ENCODE measurements at regions of chr2 and their contacts with region 1.

Region 1: GRCh38 chr2:31523871-31524492 is 56.8 kb downstream of the SRD5A2 start:
- DNase-seq: peak; percentile 33
- ATAC-seq: peak; percentile 69
- H3K4me3 ChIP-seq: no peak overlapping the region
- H3K27ac ChIP-seq: no peak overlapping the region
- H3K4me1 ChIP-seq: no peaks in the 10 kb centered on the region
- H3K27me3 ChIP-seq: no peaks in the 10 kb centered on the region
- CTCF ChIP-seq: peak; percentile 80

Region 2: DNA sequence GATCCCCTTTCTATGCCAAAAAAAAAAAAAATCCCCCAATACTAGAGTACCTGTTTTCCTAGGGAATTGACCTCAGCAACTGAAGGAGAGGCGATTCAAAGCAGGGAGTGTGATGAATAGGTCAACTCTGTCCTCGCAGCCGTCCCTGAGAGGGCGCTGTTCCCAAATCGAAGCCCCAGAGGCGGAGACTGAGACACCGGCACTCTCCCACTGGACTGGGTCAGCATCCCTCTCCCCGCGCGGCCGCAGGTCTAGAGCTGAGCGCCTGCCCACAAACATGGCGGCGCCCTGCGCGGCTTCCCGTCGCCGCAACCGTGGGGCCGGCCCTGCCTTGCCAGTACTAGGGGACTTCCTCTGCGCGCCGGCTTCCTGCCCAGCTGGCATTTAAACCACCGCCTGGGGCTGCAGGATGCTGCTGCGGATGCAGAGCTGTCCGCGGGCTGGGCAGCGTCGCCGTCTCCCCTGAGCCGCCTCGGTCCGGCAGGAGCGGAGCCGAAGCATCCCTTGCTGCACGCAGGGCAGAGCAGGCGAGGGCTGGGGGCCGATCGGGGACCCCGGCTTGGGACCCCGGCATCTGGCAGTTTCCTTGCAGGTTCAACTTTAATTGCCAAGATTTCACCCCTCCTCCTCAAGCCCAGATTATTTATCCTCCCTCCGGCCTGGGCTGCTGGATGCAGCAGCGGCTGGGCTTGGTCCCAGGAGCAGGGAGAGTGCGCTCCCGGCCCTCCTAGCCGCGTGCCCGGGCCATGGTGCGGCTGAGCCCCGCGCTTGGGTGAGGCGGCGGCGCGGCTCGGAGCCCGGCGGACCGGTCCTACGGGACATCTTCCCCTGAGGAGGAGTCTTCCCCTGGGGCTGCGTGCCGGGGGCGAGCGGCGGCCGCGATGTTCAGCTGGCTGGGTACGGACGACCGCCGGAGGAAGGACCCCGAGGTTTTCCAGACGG is 290.0 kb before region 1 on chr2 and contains the start of gene EHD3:
- CTCF ChIA-PET with region 1: no interaction called
- POLR2A ChIA-PET with region 1: no interaction called
- in situ Hi-C with region 1: no loop called
- intact Hi-C with region 1: loop called (anchors 10 kb)
- DNase-seq: peak; percentile 20
- ATAC-seq: peak; percentile 100
- H3K4me3 ChIP-seq: peak within 1 kb of the TSS; percentile 65 to 66
- H3K27ac ChIP-seq: no peak within 1 kb of the TSS
- H3K4me1 ChIP-seq: no peaks in the 10 kb centered on the region
- H3K27me3 ChIP-seq: peaks cover 14% of the 10 kb centered on the region
- CTCF ChIP-seq: no peak; the same call in 1 of the 2 replicates
- total RNA-seq, gene EHD3: 2.6 TPM

Region 3: GRCh38 chr2:31413862-31414550 is 110.0 kb before region 1 on chr2:
- CTCF ChIA-PET with region 1: no interaction called
- POLR2A ChIA-PET with region 1: no interaction called
- in situ Hi-C with region 1: no loop called
- intact Hi-C with region 1: loop called (anchors 5 kb)
- DNase-seq: no peak
- ATAC-seq: no peak
- H3K4me3 ChIP-seq: no peak overlapping the region
- H3K27ac ChIP-seq: no peak overlapping the region
- H3K4me1 ChIP-seq: no peaks in the 10 kb centered on the region
- H3K27me3 ChIP-seq: no peaks in the 10 kb centered on the region
- CTCF ChIP-seq: peak; percentile 64